ENCODE measurements at regions of chr10 and their contacts with region 1.

Region 1: DNA sequence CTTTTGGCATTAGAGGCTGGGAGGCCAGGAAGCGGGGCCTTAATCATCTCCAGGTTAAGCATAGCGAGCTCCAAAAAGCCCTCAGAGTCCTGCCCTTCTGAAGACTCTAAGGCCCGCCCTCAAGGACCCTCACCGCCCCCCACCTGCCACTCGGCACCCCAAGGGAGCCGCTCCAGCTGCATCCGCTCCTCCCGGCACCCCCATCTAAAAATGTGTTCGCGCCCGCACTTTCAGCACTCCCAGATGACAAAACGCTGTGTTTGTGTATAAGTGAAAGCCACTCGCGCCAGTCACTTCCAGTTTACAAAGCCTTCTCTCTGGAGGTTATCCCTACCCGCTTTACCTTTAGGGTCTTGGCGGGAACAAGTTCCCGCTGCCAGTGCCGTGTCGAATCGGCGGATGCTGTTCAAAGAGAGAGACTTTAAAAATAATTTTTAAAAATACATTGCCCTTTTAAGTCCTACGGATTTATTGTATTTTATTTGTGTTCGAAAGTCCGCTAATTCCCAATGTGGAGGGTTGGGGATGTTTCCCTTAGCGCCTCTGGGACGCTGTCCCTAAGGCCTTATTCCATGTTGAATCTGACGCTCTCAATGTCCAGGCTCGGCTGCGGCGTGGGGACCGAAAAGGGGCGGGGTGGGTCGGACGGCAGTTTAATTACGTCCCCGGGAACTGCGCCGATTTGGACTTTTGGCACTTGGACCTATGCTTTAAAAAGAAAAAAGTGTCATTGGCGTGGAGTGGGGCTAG is at the starts of genes DCLRE1A and NHLRC2:
- DNase-seq: peak; percentile 94
- H3K4me3 ChIP-seq: peak within 1 kb of the TSS; percentile 68 to 97 (median 91)
- H3K27ac ChIP-seq: peak within 1 kb of the TSS; percentile 86 to 91 (median 89)
- H3K4me1 ChIP-seq: peaks cover 9 to 69% (median 63%) of the 10 kb centered on the region in 4 donors
- H3K27me3 ChIP-seq: no peaks in the 10 kb centered on the region
- CTCF ChIP-seq: no peak
- EP300 ChIP-seq: no peak
- POLR2A ChIP-seq: no peak
- total RNA-seq, gene DCLRE1A: 4.1 to 6.5 (median 5.3) TPM
- total RNA-seq, gene NHLRC2: 30.6 to 59.4 (median 40.3) TPM

Region 2: GRCh38 chr10:113704637-113705343 is 149.4 kb before region 1 on chr10:
- intact Hi-C with region 1: loop called (anchors 10 kb)
- DNase-seq: no peak
- H3K4me3 ChIP-seq: no peak overlapping the region
- H3K27ac ChIP-seq: no peak overlapping the region
- H3K4me1 ChIP-seq: peaks cover 4 to 43% (median 33%) of the 10 kb centered on the region in 4 donors
- H3K27me3 ChIP-seq: no peaks in the 10 kb centered on the region
- CTCF ChIP-seq: peak; percentile 57 to 72 (median 64)
- EP300 ChIP-seq: no peak
- POLR2A ChIP-seq: no peak

Region 3: DNA sequence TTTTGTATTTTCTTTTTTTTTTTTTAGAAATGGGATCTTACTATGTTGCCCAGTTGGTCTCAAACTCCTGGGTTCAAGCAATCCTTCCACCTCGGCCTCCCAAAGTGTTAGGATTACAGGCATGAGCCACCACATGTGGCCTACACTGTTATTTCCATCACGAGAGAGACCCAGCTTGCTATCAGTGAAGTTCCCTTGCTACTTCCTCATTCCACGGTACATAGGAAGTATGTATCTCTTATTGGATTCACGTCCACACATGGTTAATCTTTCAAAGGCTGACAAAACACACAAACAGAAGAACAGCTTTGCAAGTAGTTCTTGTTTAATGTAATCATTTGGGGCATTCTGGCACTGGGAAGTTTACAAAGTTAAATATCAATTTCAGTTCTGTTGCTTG is 51.2 kb before region 1 on chr10:
- intact Hi-C with region 1: loop called (anchors 5 kb)
- DNase-seq: no peak
- H3K4me3 ChIP-seq: no peak overlapping the region
- H3K27ac ChIP-seq: peak overlapping the region in 3 of 4 donors; percentile 20 to 38 (median 25)
- H3K4me1 ChIP-seq: peaks cover 0 to 31% (median 25%) of the 10 kb centered on the region in 4 donors
- H3K27me3 ChIP-seq: no peaks in the 10 kb centered on the region
- CTCF ChIP-seq: no peak
- EP300 ChIP-seq: no peak
- POLR2A ChIP-seq: no peak

Region 4: DNA sequence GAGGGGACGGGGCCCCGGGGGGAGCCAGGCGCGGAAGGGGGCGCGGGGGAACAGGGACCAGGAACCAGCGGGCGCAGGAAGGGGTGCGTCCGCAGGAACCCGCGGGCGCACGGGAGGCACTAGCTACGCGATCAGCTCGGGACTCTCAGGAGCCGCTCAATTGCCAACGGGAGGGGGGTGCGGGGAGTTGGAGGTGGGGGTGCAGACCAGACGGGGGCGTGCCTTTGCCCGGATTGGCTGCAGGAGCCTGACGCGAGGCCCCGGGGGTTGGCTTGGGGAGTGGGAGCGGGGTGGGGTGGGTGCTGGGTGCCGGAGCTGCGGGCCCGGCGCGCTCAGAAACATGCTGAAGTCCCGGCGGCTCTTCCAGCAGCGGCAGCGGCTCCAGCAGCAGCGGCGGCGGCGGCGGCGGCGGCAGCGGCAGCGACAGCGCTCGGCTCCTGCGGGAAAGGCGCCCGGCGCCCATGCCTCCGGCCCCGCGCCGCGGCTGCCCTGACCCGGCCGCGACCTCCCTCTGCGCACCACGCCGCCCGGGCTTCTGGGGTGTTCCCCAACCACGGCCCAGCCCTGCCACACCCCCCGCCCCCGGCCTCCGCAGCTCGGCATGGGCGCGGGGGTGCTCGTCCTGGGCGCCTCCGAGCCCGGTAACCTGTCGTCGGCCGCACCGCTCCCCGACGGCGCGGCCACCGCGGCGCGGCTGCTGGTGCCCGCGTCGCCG is 189.5 kb after region 1 on chr10 and contains the start of gene ADRB1:
- intact Hi-C with region 1: loop called (anchors 5 kb)
- DNase-seq: peak; percentile 95
- H3K4me3 ChIP-seq: peak within 1 kb of the TSS; percentile 63 to 72 (median 68)
- H3K27ac ChIP-seq: peak within 1 kb of the TSS; percentile 93 to 95 (median 94)
- H3K4me1 ChIP-seq: peaks cover 0 to 48% (median 36%) of the 10 kb centered on the region in 4 donors
- H3K27me3 ChIP-seq: peaks cover 0 to 20% (median 1%) of the 10 kb centered on the region in 4 donors
- CTCF ChIP-seq: no peak
- EP300 ChIP-seq: no peak
- POLR2A ChIP-seq: peak; percentile 26
- total RNA-seq, gene ADRB1: 4.2 to 25.3 (median 12.3) TPM

Region 5: DNA sequence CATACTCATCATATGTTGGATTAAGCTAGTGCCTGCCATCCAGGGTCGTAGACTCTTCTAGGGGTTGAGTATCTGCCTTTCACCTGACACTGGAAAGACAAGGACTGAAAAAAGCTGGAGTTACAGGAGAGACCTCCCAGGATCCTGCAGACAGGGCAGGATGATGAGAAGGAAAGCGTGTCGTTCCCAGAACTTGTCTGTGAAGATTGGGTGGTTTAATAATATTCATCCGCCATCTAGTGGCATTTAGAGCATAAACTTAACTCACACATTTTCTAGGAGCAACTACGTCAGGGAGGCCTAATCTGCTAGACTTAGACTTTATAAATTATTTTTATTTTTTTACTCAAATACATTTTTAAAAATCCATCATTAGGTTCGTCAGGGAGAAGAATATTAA is 249.1 kb after region 1 on chr10:
- intact Hi-C with region 1: loop called (anchors 10 kb)
- DNase-seq: no peak
- H3K4me3 ChIP-seq: no peak overlapping the region
- H3K27ac ChIP-seq: no peak overlapping the region
- H3K4me1 ChIP-seq: peaks cover 4 to 22% (median 19%) of the 10 kb centered on the region in 4 donors
- H3K27me3 ChIP-seq: no peaks in the 10 kb centered on the region
- CTCF ChIP-seq: peak; percentile 56 to 69 (median 67)
- EP300 ChIP-seq: no peak
- POLR2A ChIP-seq: no peak

Region 6: DNA sequence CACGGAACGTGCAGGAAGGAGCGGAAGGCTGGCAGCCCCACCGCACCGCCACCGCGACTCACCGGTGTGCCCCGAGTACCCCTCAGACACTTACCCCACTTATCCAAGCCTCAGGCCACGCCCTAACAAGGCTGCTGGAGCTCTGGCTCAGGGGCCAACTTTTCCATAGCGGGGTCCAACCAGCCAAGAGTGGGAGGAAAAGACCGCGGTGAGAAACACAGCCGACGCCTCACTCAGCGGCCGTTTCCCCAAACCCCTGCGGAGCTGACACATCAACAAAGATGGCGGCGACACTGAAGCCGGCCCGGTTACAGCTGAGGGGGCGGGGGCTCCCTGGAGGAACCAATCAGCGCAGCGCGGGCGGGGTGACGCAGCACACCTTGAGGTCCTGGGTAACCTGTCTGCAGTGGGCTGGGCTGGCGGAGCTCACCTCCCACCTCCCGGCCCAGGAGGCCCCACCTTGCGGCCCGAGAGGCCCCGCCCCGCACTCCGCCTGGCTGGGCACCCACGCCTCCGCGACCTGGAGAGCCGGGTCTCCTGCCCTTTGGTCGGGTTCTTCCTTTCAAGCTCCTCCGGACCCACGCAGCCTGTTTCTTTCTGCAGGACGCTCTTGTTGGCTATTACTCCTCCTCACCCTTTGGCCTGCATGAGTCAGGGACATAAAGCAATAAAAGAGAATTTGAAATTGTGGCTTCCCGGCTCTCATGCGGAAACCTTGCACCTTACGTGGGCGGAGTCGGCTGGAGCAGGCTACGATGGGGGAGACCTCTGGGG is 319.9 kb after region 1 on chr10 and contains the start of gene CCDC186:
- intact Hi-C with region 1: loop called (anchors 5 kb)
- DNase-seq: peak; percentile 99
- H3K4me3 ChIP-seq: peak within 1 kb of the TSS; percentile 87 to 99 (median 96)
- H3K27ac ChIP-seq: peak within 1 kb of the TSS; percentile 93 to 96 (median 94)
- H3K4me1 ChIP-seq: peaks cover 0 to 27% (median 19%) of the 10 kb centered on the region in 4 donors
- H3K27me3 ChIP-seq: no peaks in the 10 kb centered on the region
- CTCF ChIP-seq: peak in 1 of 3 experiments; percentile 9
- EP300 ChIP-seq: no peak
- POLR2A ChIP-seq: no peak
- total RNA-seq, gene CCDC186: 13.8 to 25.7 (median 20.9) TPM

Measured in esophagus muscularis mucosa (tissue), 4 donors.